ENCODE measurements at regions of chr15 and their contacts with region 1.

Region 1: DNA sequence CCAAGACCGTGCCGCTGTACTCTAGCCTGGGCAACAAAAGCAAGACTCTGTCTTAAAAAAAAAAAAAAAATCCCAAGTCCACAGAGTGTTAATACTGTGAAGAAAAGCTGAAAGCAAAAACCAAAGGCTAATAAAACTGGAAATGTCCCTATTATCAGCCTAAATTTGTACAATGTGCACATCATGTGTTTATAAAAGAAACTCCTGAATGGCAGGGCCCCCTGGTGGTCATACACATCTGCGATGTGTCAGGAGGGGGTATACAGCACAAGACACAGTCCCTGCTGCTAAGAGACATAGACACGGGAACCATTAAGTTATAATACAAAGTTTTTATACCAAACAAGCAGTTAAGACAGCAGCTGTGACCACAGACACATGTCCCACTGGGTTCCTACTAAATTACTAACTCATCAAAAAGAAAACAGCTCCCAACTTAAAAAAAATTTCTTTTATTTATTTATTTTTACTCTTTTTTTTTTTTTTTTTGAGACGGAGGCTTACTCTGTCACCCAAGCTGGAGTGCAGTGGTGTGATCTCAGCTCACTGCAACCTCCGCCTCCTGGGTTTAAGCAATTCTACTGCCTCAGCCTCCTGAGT is 31.0 kb downstream of the IDH2 start:
- DNase-seq: peak; percentile 85
- H3K4me3 ChIP-seq: no peak overlapping the region
- H3K27ac ChIP-seq: no peak overlapping the region
- H3K4me1 ChIP-seq: no peaks in the 10 kb centered on the region
- H3K27me3 ChIP-seq: no peaks in the 10 kb centered on the region
- CTCF ChIP-seq: peak; percentile 64 to 87
- POLR2A ChIP-seq: no peak

Region 2: GRCh38 chr15:89740137-89740536 is 331.2 kb before region 1 on chr15:
- CTCF ChIA-PET with region 1: interaction called, 15 read pairs
- POLR2A ChIA-PET with region 1: no interaction called
- dilution Hi-C with region 1: no loop called
- intact Hi-C with region 1: loop called (anchors 1 kb)
- DNase-seq: peak; percentile 86
- H3K4me3 ChIP-seq: no peak overlapping the region
- H3K27ac ChIP-seq: no peak overlapping the region
- H3K4me1 ChIP-seq: no peaks in the 10 kb centered on the region
- H3K27me3 ChIP-seq: peaks cover 3 to 4% of the 10 kb centered on the region in 2 experiments
- CTCF ChIP-seq: peak; percentile 75 to 77
- POLR2A ChIP-seq: no peak

Region 3: GRCh38 chr15:89893696-89894455 is 177.4 kb before region 1 on chr15 and contains the start of gene AP3S2:
- CTCF ChIA-PET with region 1: interaction called, 23 read pairs
- POLR2A ChIA-PET with region 1: no interaction called
- dilution Hi-C with region 1: no loop called
- intact Hi-C with region 1: loop called (anchors 1 kb)
- DNase-seq: peak; percentile 92
- H3K4me3 ChIP-seq: peak within 1 kb of the TSS; percentile 77 to 96 (median 86)
- H3K27ac ChIP-seq: peak within 1 kb of the TSS; percentile 69
- H3K4me1 ChIP-seq: peaks cover 5% of the 10 kb centered on the region
- H3K27me3 ChIP-seq: no peaks in the 10 kb centered on the region
- CTCF ChIP-seq: no peak
- POLR2A ChIP-seq: peak; percentile 85
- total RNA-seq, gene AP3S2: 20.4 and 31.1 TPM in 2 replicates

Region 4: DNA sequence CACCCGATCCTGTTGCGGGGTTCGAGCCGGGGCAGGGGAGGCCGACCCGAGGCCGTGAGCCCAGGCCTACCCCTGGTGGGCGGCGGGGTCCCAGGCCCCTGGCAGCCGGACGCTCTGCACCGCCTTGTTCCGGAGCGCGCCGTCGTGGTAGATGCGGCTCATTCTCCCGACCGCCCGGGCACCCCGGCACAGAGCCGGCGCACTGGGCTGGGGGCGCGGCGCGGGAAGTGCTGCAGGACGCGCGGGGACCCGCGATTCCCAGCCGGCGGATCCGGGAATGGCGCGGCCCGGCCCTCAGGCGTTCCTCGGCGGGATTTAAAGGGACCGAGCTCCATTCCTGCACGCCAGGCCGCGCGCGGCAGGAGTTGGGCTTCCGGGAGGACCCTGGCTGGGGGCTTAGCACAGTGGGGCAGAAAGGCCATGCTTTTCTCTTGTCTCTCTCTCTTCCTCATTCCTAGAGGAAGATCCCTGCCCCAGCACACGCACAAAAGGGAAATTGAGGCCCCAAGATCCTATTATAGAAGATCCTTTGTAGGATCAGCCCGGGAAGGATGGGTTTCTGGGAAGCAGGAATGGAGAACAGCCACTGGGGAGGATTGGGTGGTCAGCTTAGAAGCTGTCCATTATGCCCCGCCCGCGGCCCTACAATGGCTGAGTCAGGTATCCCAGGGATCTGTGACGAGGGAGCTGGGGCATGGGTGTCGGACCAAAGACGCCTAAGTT is 158.5 kb before region 1 on chr15 and contains the start of gene ARPIN:
- CTCF ChIA-PET with region 1: interaction called, 12 read pairs
- POLR2A ChIA-PET with region 1: no interaction called
- dilution Hi-C with region 1: no loop called
- intact Hi-C with region 1: loop called (anchors 5 kb)
- DNase-seq: peak; percentile 38
- H3K4me3 ChIP-seq: peak within 1 kb of the TSS; percentile 61 to 84 (median 68)
- H3K27ac ChIP-seq: peak within 1 kb of the TSS; percentile 5
- H3K4me1 ChIP-seq: peaks cover 11% of the 10 kb centered on the region
- H3K27me3 ChIP-seq: no peaks in the 10 kb centered on the region
- CTCF ChIP-seq: no peak
- POLR2A ChIP-seq: peak; percentile 41
- total RNA-seq, gene ARPIN: 18.7 and 23.3 TPM in 2 replicates

Region 5: DNA sequence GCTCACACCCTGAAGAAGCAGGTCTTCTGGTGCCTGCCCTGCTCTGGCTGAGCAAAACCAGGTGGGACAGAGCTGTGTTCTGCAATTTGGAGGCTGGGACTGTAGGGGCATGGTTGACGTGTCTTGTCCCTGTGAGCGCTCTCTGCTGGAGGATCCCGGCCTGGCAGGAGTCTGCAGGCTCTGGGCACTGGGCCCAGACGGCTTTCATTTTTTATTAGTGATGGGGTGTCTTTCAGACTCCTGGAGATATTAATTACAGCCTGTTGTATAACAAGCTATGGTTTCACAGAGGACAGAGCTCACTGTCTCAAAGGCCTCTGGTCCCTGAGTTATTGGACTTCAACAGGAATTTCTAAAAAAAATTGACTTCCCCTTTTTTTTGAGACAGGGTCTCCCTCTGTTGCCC is 99.7 kb before region 1 on chr15:
- CTCF ChIA-PET with region 1: interaction called, 8 read pairs
- POLR2A ChIA-PET with region 1: no interaction called
- dilution Hi-C with region 1: no loop called
- intact Hi-C with region 1: loop called (anchors 2 kb)
- DNase-seq: peak; percentile 29
- H3K4me3 ChIP-seq: no peak overlapping the region
- H3K27ac ChIP-seq: no peak overlapping the region
- H3K4me1 ChIP-seq: no peaks in the 10 kb centered on the region
- H3K27me3 ChIP-seq: peaks cover 0 to 4% of the 10 kb centered on the region in 2 experiments
- CTCF ChIP-seq: peak; percentile 40 to 64
- POLR2A ChIP-seq: no peak

Region 6: GRCh38 chr15:90001683-90002427 is 69.5 kb before region 1 on chr15:
- CTCF ChIA-PET with region 1: interaction called, 22 read pairs
- POLR2A ChIA-PET with region 1: no interaction called
- dilution Hi-C with region 1: no loop called
- intact Hi-C with region 1: loop called (anchors 1 kb)
- DNase-seq: no peak
- H3K4me3 ChIP-seq: peak overlapping the region; percentile 62 to 80 (median 63)
- H3K27ac ChIP-seq: no peak overlapping the region
- H3K4me1 ChIP-seq: peaks cover 52% of the 10 kb centered on the region
- H3K27me3 ChIP-seq: no peaks in the 10 kb centered on the region
- CTCF ChIP-seq: no peak
- POLR2A ChIP-seq: no peak

Region 7: GRCh38 chr15:90031231-90031791 is 40.0 kb before region 1 on chr15:
- CTCF ChIA-PET with region 1: interaction called, 23 read pairs
- POLR2A ChIA-PET with region 1: interaction called, 5 read pairs
- dilution Hi-C with region 1: no loop called
- intact Hi-C with region 1: no loop called
- DNase-seq: no peak
- H3K4me3 ChIP-seq: no peak overlapping the region
- H3K27ac ChIP-seq: no peak overlapping the region
- H3K4me1 ChIP-seq: peaks cover 31% of the 10 kb centered on the region
- H3K27me3 ChIP-seq: no peaks in the 10 kb centered on the region
- CTCF ChIP-seq: no peak
- POLR2A ChIP-seq: no peak